ENCODE measurements at regions of chr17 and their contacts with region 1.

Region 1: GRCh38 chr17:20797292-20797691 is 217.8 kb downstream of the CDRT15L2 start:
- DNase-seq: no peak
- ATAC-seq: no peak
- H3K4me3 Mint-ChIP-seq: no peak overlapping the region
- H3K27ac Mint-ChIP-seq: no peak overlapping the region
- H3K4me1 Mint-ChIP-seq: no peaks in the 10 kb centered on the region
- H3K27me3 Mint-ChIP-seq: no peaks in the 10 kb centered on the region
- CTCF ChIP-seq: no peak

Region 2: GRCh38 chr17:20735796-20736195 is 61.5 kb before region 1 on chr17:
- CTCF ChIA-PET with region 1: no interaction called
- POLR2A ChIA-PET with region 1: no interaction called
- DNase-seq: no peak
- ATAC-seq: no peak
- H3K4me3 Mint-ChIP-seq: no peak overlapping the region
- H3K27ac Mint-ChIP-seq: no peak overlapping the region
- H3K4me1 Mint-ChIP-seq: no peaks in the 10 kb centered on the region
- H3K27me3 Mint-ChIP-seq: no peaks in the 10 kb centered on the region
- CTCF ChIP-seq: no peak

Region 3: GRCh38 chr17:20852239-20852989 is 55.1 kb after region 1 on chr17:
- CTCF ChIA-PET with region 1: interaction called, 15 read pairs
- POLR2A ChIA-PET with region 1: no interaction called
- DNase-seq: peak; percentile 66
- ATAC-seq: peak; percentile 77
- H3K4me3 Mint-ChIP-seq: no peak overlapping the region; the same call in 1 of the 2 replicates
- H3K27ac Mint-ChIP-seq: peak overlapping the region; percentile 30; the same call in 1 of the 2 replicates
- H3K4me1 Mint-ChIP-seq: peaks cover 20% of the 10 kb centered on the region
- H3K27me3 Mint-ChIP-seq: peaks cover 27% of the 10 kb centered on the region
- CTCF ChIP-seq: no peak